BJ (cell line): ENCODE measurements at regions of chr6 and their contacts with region 1.

Region 1: GRCh38 chr6:35514587-35514986 is 1.9 kb upstream of the TULP1 start:
- DNase-seq: no peak
- H3K4me3 ChIP-seq: no peak overlapping the region
- H3K27me3 ChIP-seq: peaks cover 12% of the 10 kb centered on the region
- CTCF ChIP-seq: no peak

Region 2: DNA sequence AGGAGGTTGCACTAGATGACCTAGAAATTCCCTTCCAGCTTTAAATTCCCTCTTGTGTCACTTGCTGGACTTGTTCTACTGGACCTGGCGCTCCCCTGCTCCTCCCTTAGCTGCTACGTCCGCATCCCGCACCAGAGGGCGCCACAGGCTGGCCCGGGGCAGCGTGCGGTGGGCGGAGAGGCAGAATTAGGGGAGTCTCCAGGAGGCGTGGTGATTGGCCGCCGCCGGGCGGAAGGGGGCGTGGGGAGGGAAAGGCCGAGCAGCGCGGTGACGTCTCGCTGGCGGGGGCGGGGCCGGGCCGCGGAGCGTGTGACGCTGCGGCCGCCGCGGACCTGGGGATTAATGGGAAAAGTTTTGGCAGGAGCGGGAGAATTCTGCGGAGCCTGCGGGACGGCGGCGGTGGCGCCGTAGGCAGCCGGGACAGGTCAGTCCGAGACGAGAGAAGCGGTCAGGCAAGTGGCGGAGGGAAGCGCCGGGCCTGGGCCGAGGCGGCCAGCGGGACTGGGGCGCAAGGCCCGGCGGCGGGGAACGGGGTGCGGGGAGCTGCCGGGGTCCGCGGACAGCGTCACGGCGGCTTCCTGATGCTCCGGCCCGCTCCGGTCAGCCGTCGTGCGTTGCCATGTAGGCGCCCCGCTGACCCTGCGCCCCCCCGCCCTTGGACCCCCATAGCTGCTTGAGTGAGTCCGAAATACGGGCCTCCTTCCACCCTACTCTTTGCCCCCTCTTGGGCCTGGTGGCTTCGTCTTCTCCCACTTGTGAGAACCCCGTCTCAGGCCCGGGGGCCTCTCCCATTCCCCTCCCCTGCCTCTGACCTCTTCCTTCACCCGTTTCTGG is 172.1 kb before region 1 on chr6 and contains the start of gene PPARD:
- CTCF ChIA-PET with region 1: no interaction called
- POLR2A ChIA-PET with region 1: no interaction called
- DNase-seq: peak; percentile 69
- H3K4me3 ChIP-seq: peak within 1 kb of the TSS; percentile 86
- H3K27me3 ChIP-seq: no peaks in the 10 kb centered on the region
- CTCF ChIP-seq: peak; percentile 97
- polyA plus RNA-seq, gene PPARD: 22.8 and 40.9 TPM in 2 replicates

Region 3: DNA sequence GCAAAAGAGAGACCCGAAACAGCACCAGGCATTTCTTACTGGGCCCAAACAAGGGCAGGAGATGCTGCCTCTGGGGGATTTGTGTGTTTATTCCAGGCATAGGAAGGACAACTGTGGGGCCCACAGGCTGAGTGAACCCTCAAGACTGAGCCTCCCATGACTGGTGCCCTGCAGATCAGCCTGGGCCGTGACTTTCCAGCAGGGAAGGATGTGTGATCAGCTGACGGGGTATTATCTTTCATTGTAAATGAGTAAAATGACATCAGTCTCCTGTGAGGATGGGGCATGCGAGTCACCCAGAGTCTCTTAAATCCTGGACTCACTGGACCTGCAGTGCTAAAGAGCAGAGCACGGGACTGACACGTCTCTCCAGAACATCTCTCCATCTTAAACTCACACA is 13.8 kb before region 1 on chr6:
- CTCF ChIA-PET with region 1: interaction called, 3 read pairs
- POLR2A ChIA-PET with region 1: interaction called, 13 read pairs
- DNase-seq: peak; percentile 52
- H3K4me3 ChIP-seq: no peak overlapping the region
- H3K27me3 ChIP-seq: peaks cover under 1% of the 10 kb centered on the region
- CTCF ChIP-seq: no peak